ENCODE measurements at regions of chr1 and their contacts with region 1.

Region 1: DNA sequence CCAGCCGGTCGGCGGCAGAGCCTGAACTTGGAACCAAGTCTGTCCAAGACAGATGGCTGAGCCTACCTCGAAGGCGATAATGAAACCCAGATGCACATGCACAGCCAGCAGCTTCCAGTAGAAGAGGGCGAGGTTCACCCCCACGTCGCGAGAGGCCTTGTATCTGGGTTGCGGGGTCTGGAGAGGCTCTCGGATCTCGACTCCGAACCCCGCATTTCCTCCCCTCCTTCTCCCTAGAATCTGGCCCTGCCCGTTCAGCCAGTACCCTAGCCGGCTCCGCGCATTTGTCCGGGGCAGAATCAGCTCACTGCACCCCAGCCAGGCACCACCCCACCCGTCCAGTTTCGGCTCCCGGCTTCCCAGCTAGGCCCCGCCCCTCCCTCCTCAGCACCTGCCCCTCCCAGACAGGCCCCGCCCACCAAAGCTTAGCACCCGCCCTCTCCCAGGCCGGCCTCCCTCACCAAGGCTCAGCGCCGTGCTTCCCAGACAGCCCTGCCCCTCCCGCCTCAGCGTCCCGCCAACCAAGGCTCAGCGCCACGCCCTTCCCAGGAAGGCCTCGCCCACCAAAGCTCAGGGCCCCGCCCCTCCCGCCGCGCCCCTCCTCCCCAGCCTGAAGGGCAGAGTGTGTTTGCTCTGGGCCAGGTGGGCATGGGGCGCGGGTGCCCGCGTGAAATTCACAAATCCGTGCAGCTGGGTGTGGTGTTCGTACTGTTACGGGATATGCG is 4.8 kb upstream of the ARHGEF19 start:
- DNase-seq: peak; percentile 99 to 100 (median 100)
- ATAC-seq: peak; percentile 97
- H3K4me3 ChIP-seq: peak overlapping the region; percentile 41
- H3K27ac ChIP-seq: peak overlapping the region; percentile 4; the same call in 2 of the 3 replicates
- H3K4me1 ChIP-seq: peaks cover 15 to 32% of the 10 kb centered on the region in 2 experiments; a peak in 4 of 5 replicates
- H3K27me3 ChIP-seq: no peaks in the 10 kb centered on the region
- CTCF ChIP-seq: no peak
- EP300 ChIP-seq: no peak
- POLR2A ChIP-seq: peak; percentile 46; the same call in 1 of the 2 replicates
- RAD21 ChIP-seq: no peak

Region 2: DNA sequence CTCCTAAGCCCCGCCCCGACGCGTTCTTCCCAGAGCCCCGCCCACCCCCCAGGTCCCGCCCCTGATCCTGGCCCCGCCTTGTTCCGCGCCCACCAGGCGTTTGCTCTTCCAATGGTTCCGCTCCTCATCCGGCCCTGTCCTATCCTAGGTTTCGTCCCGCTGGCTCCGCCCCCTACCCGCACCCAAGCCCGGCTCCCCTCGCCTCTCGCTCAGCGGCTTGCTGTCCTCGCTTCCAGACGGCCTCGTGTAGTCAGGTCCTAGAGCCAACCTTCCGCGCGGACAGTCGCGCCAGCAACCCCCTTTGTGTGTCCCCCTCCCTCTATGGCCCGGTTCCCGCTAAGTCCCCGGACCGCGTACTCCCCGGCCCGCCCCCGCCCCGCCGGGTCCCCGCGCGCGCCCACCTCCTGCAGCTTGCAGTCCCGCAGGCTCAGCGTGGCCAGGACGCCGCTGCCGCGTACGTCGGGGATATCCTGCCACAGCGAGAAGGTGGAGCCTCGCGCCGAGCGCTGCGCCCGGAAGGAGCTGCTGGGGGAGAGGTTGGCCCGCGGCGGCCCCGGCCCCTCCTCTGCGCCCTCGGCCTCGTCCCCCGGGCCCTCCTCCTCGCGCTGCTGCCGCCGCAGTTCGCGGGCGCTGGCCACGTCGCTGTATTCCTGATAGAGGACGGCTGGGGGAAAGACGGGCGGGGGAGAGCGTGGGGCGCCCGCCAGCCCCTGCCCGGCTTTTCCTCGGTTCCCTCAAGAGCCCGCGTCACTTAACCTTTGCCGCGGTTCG is 10.5 kb before region 1 on chr1:
- CTCF ChIA-PET with region 1: no interaction called
- POLR2A ChIA-PET with region 1: interaction called, 21 read pairs
- in situ Hi-C with region 1: no loop called
- intact Hi-C with region 1: no loop called
- DNase-seq: peak; percentile 96 to 100 (median 96)
- ATAC-seq: peak; percentile 94
- H3K4me3 ChIP-seq: peak overlapping the region; percentile 54
- H3K27ac ChIP-seq: peak overlapping the region; percentile 97
- H3K4me1 ChIP-seq: peaks cover 26 to 53% of the 10 kb centered on the region in 2 experiments
- H3K27me3 ChIP-seq: no peaks in the 10 kb centered on the region
- CTCF ChIP-seq: 0 out of 6 replicates have a peak, but pooled peaks of 1 of the 3 experiments have one; percentile 2
- EP300 ChIP-seq: no peak
- POLR2A ChIP-seq: peak; percentile 97
- RAD21 ChIP-seq: 0 out of 4 replicates have a peak, but pooled peaks of 1 of the 2 experiments have one; percentile 2

Measured in K562 (cell line).